ENCODE measurements at regions of chr9 and their contacts with region 1.

Region 1: DNA sequence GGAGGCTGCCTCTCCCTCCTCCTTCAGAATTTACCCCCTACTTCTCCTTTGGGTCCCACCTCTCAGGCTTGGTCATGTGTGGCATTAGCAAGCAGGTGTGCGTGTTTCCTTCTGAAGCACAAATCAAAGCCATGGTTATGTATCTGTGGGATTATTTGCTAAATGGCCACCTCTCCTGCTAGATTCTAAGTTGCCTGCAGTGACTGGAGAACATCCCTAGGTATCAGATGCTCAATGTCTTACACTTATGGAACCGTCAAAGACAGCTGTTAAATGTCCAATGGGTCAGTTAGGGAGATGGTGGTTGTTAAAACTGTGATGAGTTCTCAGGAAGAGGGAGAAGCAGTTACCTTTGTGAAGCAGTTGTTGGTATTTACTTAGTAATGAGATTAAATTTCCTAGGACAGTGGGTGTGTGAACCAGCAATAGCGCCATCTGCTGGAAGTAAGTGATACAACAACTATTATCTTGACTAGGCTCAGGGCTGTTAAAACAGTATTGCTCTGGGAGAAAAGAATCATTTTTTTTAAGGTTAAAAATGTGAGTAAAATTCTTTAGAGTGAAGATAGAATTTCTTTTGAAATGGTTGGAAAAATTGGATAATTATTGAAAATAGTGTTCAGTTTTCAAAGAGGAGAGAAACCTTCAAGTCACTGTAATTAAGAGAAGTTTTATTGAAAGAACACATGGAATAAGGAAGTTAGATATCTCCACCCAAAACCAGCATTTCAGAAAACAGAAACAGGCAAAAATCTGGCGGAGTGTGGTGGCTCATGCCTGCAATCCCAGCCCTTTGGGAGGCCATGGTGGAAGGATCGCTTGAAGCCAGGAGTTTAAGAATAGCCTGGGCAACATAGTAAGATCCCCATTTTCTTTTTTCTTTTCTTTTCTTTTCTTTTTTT is 71.3 kb downstream of the TMC1 start:
- DNase-seq: peak in 1 of 10 donors; percentile 42
- H3K4me3 ChIP-seq: no peak overlapping the region
- H3K27ac ChIP-seq: peak overlapping the region in 4 of 59 donors; percentile 8 to 28 (median 20)
- H3K27me3 ChIP-seq: no peaks in the 10 kb centered on the region
- CTCF ChIP-seq: peak; percentile 81 to 99 (median 92)

Region 2: DNA sequence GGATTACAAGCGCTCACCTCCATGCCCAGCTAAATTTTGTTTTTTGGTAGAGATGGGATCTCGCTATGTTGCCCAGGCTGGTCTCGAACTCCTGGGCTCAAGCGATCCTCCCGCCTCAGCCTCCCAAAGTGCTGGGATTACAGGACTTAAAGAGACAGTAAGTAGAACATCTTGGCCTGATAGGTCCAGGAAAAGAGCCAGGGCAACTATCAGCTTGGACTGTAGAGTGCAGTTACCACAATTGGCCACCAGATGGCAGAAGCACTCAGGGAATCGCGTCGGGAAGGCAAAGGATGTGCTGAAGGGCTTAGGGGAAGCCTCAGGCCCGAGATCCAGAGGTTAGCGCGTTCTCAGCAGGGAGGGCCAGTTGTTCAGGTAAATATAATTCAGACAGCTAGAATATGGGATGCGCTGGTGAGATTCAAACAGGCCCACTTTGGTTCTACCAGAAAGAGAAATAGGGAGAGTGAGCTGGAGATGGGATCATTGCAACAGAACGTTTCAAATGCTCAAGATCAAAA is 553.8 kb before region 1 on chr9:
- intact Hi-C with region 1: loop called in 1 of 2 experiments (anchors 10 kb)
- DNase-seq: peak; percentile 57 to 88 (median 80)
- H3K4me3 ChIP-seq: peak overlapping the region in 1 of 59 donors; percentile 11
- H3K27ac ChIP-seq: peak overlapping the region in 7 of 59 donors; percentile 8 to 71 (median 46)
- H3K27me3 ChIP-seq: no peaks in the 10 kb centered on the region
- CTCF ChIP-seq: peak; percentile 94 to 99 (median 98)

Region 3: GRCh38 chr9:72292256-72292682 is 300.5 kb before region 1 on chr9:
- intact Hi-C with region 1: loop called (anchors 2 kb)
- DNase-seq: no peak
- H3K4me3 ChIP-seq: peak overlapping the region in 1 of 59 donors; percentile 3
- H3K27ac ChIP-seq: no peak overlapping the region
- H3K27me3 ChIP-seq: no peaks in the 10 kb centered on the region
- CTCF ChIP-seq: peak; percentile 59 to 89 (median 76)

Region 4: DNA sequence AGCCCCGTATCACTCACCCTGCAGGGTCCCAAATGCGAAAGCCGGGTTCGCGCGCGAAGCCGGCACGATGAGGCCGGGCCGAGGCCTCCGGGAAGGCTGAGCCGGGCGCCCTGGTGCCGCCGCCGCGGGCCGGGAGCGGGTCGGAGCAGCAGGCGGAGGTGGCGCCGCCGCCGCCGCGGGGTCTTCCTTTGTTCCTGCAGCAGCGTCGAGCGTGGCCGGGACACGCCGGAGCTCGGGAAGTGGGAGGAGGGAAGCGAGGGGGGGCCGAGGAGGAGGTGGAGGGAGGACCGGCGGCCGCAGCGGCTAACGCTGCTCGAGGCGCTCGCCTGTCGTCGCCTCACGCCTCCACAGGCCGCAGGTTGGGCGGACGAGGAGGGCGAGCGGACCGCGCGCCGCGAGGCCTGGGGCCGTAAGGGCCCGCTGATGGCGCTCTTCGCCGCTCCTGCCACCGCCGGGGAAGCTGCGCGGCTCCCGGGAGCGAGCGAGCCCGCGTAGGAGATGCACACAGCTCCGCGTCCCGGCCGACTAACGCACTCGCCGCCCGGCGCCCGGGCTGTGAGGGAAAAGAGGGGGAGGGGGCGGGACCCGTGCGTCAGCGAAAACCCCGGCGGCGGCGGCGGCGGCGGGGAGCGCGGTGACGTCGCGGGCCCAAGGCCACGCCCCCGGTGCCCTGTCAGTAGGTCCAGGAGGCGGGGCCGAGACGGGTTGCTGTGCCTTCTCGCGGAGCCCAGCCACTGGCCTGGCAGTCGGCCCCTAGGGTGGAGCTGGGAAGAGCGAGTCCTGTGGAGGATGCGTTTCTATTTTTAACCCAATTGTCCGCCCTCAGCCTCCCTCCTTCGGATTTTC is 227.9 kb before region 1 on chr9 and contains the start of gene ZFAND5:
- intact Hi-C with region 1: loop called (anchors 2 kb)
- DNase-seq: peak; percentile 97 to 99 (median 98)
- H3K4me3 ChIP-seq: peak within 1 kb of the TSS; percentile 55 to 97 (median 87)
- H3K27ac ChIP-seq: peak within 1 kb of the TSS; percentile 94 to 100 (median 100)
- H3K27me3 ChIP-seq: no peaks in the 10 kb centered on the region
- CTCF ChIP-seq: peak in 28 of 56 donors; percentile 4 to 51 (median 18)
- total RNA-seq, gene ZFAND5: 156 to 388 (median 286) TPM

Region 5: GRCh38 chr9:72675586-72675985 is 82.8 kb after region 1 on chr9:
- intact Hi-C with region 1: loop called in 1 of 2 experiments (anchors 10 kb)
- DNase-seq: no peak
- H3K4me3 ChIP-seq: no peak overlapping the region
- H3K27ac ChIP-seq: peak overlapping the region in 3 of 59 donors; percentile 6 to 40 (median 34)
- H3K27me3 ChIP-seq: no peaks in the 10 kb centered on the region
- CTCF ChIP-seq: no peak

Region 6: GRCh38 chr9:72753266-72753893 is 160.6 kb after region 1 on chr9:
- intact Hi-C with region 1: loop called in 1 of 2 experiments (anchors 5 kb)
- DNase-seq: peak in 2 of 10 donors; percentile 11 to 27
- H3K4me3 ChIP-seq: no peak overlapping the region
- H3K27ac ChIP-seq: no peak overlapping the region
- H3K27me3 ChIP-seq: peaks cover 0 to under 1% (median 0%) of the 10 kb centered on the region in 45 donors
- CTCF ChIP-seq: peak in 53 of 56 donors; percentile 14 to 72 (median 51)

Region 7: GRCh38 chr9:72827950-72828731 is 235.4 kb after region 1 on chr9:
- intact Hi-C with region 1: loop called in 1 of 2 experiments (anchors 10 kb)
- DNase-seq: no peak
- H3K4me3 ChIP-seq: no peak overlapping the region
- H3K27ac ChIP-seq: no peak overlapping the region
- H3K27me3 ChIP-seq: no peaks in the 10 kb centered on the region
- CTCF ChIP-seq: no peak

Measured in dorsolateral prefrontal cortex (tissue), 120 donors.